K562 (cell line): ENCODE measurements at regions of chr3 and their contacts with region 1.

Region 1: GRCh38 chr3:126522363-126522788 is 1.6 kb upstream of the CHST13 start:
- DNase-seq: peak; percentile 45 to 69 (median 64)
- ATAC-seq: peak; percentile 49; the same call in 2 of the 3 replicates
- H3K4me3 ChIP-seq: no peak overlapping the region
- H3K27ac ChIP-seq: no peak overlapping the region
- H3K4me1 ChIP-seq: peaks cover 0 to 12% of the 10 kb centered on the region in 2 experiments; a peak in 2 of 5 replicates
- H3K27me3 ChIP-seq: peaks cover 0 to 11% of the 10 kb centered on the region in 2 experiments; a peak in 1 of 5 replicates
- CTCF ChIP-seq: peak; percentile 61 to 73 (median 62)
- EP300 ChIP-seq: no peak
- POLR2A ChIP-seq: no peak
- RAD21 ChIP-seq: peak; percentile 57 to 65

Region 2: DNA sequence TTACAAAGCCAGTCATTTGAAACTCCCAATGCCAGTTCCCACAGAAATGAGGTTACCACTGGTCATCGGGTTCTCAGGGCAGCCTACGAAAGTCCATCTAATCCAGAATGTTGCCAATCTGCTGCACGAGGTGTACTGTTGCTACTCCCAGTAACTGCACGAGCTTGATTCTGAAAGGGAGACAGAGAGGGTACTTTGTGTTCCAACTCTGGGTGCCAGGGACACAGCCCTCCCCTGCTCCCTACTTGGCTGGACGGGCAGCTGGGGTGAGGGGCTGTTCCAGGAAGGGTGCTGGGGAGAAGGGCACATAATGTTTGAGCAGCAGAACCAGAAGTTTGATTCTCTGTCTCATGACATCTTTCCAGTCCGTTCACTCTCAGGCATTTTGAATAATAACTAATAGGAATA is 900.0 kb before region 1 on chr3:
- CTCF ChIA-PET with region 1: no interaction called
- POLR2A ChIA-PET with region 1: no interaction called
- in situ Hi-C with region 1: no loop called
- intact Hi-C with region 1: no loop called
- DNase-seq: no peak
- ATAC-seq: no peak
- H3K4me3 ChIP-seq: no peak overlapping the region
- H3K27ac ChIP-seq: no peak overlapping the region
- H3K4me1 ChIP-seq: no peaks in the 10 kb centered on the region
- H3K27me3 ChIP-seq: peaks cover 3 to 23% of the 10 kb centered on the region in 2 experiments; a peak in 3 of 5 replicates
- CTCF ChIP-seq: no peak
- EP300 ChIP-seq: no peak
- POLR2A ChIP-seq: no peak
- RAD21 ChIP-seq: no peak

Region 3: GRCh38 chr3:126659945-126660886 is 137.8 kb after region 1 on chr3:
- CTCF ChIA-PET with region 1: no interaction called
- POLR2A ChIA-PET with region 1: no interaction called
- in situ Hi-C with region 1: no loop called
- intact Hi-C with region 1: loop called (anchors 10 kb)
- DNase-seq: no peak
- ATAC-seq: peak; percentile 58; the same call in 2 of the 3 replicates
- H3K4me3 ChIP-seq: no peak overlapping the region
- H3K27ac ChIP-seq: no peak overlapping the region
- H3K4me1 ChIP-seq: no peaks in the 10 kb centered on the region
- H3K27me3 ChIP-seq: peaks cover 0 to 49% of the 10 kb centered on the region in 2 experiments; a peak in 2 of 5 replicates
- CTCF ChIP-seq: peak; percentile 8 to 26 (median 11); a peak in 1 of 6 replicates
- EP300 ChIP-seq: no peak
- POLR2A ChIP-seq: no peak
- RAD21 ChIP-seq: no peak

Region 4: GRCh38 chr3:126746395-126747177 is 224.2 kb after region 1 on chr3:
- CTCF ChIA-PET with region 1: no interaction called
- POLR2A ChIA-PET with region 1: no interaction called
- in situ Hi-C with region 1: no loop called
- intact Hi-C with region 1: loop called (anchors 10 kb)
- DNase-seq: peak; percentile 34 to 64 (median 39)
- ATAC-seq: peak; percentile 92
- H3K4me3 ChIP-seq: no peak overlapping the region
- H3K27ac ChIP-seq: no peak overlapping the region
- H3K4me1 ChIP-seq: peaks cover 7 to 13% of the 10 kb centered on the region in 2 experiments; a peak in 4 of 5 replicates
- H3K27me3 ChIP-seq: no peaks in the 10 kb centered on the region
- CTCF ChIP-seq: peak; percentile 42 to 52 (median 49); a peak in 5 of 6 replicates
- EP300 ChIP-seq: no peak
- POLR2A ChIP-seq: no peak
- RAD21 ChIP-seq: peak; percentile 41 to 56